Activated CD4-positive, alpha-beta memory T cell treated with anti-CD3 and anti-CD28 coated beads for 36 hours (primary cell): ENCODE measurements at regions of chr15 and their contacts with region 1.

Region 1: DNA sequence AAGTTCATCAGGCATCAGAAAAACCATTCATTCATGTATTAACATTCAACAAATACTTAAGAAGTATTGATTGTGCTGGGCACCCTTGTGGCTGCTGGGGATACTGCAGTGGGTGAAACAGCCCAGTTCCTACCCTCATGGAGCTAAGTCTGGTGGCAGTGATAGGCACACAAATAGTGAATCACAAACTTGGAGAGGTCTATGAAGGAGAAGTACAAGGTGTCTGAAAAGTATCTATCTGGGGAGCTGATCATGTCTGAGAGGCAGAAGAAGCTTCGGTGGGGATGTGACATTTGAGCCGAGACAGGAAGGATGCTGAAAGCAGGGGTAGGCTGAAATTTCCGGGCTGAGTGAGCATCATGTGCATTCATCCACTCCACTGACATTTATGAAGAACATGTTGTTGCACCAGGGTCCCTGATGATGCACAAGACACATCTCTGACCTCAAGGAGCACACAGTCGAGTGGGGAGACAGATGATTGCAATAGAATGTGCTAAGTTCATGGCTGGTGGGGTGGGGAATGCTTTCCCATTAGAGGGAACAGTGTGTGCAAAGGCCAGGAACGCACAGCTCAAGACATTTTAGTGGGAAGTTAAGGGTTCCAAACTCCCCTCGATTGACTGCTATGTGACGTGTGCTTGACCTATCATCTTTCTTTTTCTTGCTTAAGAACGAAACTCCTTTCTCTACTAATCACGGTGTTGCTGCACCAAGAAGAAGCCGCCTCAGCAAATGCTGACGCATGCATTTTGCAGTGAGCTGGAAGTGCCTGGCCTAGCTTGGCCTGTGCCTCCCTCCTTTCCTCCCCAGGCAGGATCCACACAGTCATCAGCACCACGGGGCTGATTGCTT is 309.1 kb upstream of the ICE2 start:
- DNase-seq: peak; percentile 77
- H3K4me3 Mint-ChIP-seq: peak overlapping the region; percentile 13
- H3K27ac Mint-ChIP-seq: peak overlapping the region; percentile 79
- H3K4me1 Mint-ChIP-seq: peaks cover 72% of the 10 kb centered on the region
- H3K27me3 Mint-ChIP-seq: no peaks in the 10 kb centered on the region

Region 2: GRCh38 chr15:60704129-60704528 is 83.9 kb before region 1 on chr15:
- CTCF ChIA-PET with region 1: interaction called, 11 read pairs
- POLR2A ChIA-PET with region 1: no interaction called
- intact Hi-C with region 1: no loop called
- DNase-seq: peak; percentile 66
- H3K4me3 Mint-ChIP-seq: peak overlapping the region; percentile 45
- H3K27ac Mint-ChIP-seq: peak overlapping the region; percentile 57
- H3K4me1 Mint-ChIP-seq: peaks cover 77% of the 10 kb centered on the region
- H3K27me3 Mint-ChIP-seq: no peaks in the 10 kb centered on the region

Region 3: DNA sequence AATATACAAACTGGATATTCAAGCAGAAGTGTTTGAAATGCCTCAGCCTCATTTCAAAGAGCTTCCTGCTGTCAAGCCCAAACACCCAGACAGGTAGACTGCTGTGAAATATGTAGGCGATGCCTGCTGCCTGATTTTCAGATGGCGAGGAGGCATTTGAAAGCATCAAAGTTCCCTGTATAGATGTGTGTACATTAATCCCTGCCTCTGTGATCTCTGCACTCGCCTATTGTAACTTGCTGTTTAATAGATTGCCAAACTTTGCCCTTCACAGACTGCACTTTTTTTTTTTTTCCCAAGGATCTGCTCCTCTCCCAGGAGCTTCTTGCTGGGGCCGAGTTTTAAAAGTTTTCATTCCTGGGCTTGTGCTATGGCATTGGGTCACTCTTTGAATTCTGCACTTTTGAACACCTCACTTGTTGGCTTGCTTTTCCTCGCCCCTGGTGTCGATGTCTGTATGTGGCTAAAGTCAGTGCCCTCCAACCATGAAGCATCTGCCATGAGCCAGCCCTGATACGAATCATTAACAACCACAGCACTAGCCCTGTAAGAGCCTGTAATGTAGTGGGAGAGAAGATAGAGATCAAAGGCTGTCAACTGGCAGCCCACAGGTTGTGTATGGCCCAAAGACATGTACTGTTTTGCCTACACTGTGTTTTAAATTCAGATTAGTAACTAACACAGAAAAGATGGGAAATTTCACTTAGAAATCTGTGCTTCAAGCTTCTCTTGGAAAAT is 21.5 kb before region 1 on chr15:
- CTCF ChIA-PET with region 1: interaction called, 10 read pairs
- POLR2A ChIA-PET with region 1: no interaction called
- intact Hi-C with region 1: no loop called
- DNase-seq: no peak
- H3K4me3 Mint-ChIP-seq: no peak overlapping the region
- H3K27ac Mint-ChIP-seq: no peak overlapping the region
- H3K4me1 Mint-ChIP-seq: peaks cover 50% of the 10 kb centered on the region
- H3K27me3 Mint-ChIP-seq: no peaks in the 10 kb centered on the region

Region 4: DNA sequence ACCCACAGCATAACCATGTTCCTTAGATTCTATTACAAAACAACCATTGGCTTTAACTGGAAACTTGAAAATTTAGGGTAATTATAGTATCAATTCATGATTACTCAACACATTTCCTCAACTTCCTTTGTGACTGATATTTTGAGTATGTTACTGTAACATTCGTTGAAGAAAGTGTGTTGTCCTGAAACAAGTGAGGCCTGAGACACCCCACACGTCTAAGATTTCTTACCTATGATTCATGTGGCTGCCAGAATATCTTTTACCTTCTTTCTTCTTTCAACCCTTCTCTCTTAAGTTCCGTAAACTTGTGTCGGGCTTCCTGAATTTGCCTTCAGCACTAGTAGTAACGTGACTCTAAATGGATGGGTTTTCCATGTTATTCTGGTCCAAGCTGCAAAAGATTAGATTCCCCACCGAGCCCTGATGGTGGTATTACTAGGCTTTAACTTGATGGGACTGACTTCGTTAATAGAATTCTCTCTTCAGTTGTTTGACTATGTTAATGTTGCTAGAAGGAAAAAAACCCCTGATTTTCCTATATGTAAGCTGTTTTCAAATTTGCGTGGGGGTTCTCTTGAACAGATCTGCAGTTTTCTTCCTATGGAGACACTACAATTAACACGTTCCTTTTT is 13.1 kb before region 1 on chr15:
- CTCF ChIA-PET with region 1: interaction called, 8 read pairs
- POLR2A ChIA-PET with region 1: interaction called, 3 read pairs
- intact Hi-C with region 1: loop called (anchors 1 kb)
- DNase-seq: peak; percentile 37
- H3K4me3 Mint-ChIP-seq: peak overlapping the region; percentile 11
- H3K27ac Mint-ChIP-seq: peak overlapping the region; percentile 86
- H3K4me1 Mint-ChIP-seq: peaks cover 71% of the 10 kb centered on the region
- H3K27me3 Mint-ChIP-seq: no peaks in the 10 kb centered on the region